Activated T-helper 1 cell treated with anti-CD3 and anti-CD28 coated beads, Interleukin-12 subunit alpha, Interleukin-12 subunit beta, Interleukin-2, Interleukin-4 antibody, amounts not matched to agents 30 ng/mL and 10 ng/mL and 1 ng/mL, durations not matched to agents 14 hours and 24 hours and 36 hours (primary cell): ENCODE measurements at regions of chr3 and their contacts with region 1.

Region 1: DNA sequence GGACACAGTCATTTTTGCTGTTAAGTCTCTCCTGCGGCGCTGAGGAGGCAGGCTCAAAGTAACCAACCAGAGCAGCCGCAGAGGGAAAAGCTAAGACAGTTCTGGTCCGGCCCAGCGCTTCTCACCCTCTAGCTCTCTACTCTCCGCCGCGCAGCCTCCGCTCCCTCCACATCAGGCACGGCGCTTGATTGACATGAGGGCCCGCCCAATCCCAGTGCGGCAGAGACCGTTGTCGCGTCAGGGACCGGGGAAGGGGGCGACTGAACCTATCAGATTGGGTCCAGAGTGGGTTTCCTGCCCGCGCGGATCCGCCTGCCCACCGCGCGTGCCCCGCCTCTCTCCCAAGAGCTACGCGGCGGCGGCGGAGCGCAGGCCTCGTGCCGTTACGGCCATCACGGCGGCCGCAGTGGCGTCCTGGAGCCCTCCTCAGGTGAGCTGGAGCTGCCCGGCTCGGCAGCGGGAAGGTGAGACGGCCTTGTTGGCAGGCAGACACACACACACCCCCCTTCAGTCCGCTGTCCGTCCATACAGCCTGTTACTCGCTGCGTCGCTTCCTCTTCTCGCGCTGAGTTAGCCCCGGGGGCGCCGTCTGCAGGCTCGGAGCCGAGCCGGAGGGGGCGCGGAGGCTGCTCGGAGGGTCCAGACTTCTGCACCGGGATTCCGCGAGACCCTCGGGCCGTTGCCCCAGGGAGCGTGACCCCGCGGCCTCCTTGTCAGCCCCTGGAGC is at the start of gene NCK1:
- DNase-seq: peak; percentile 98
- H3K4me3 Mint-ChIP-seq: peak within 1 kb of the TSS; percentile 97
- H3K27ac Mint-ChIP-seq: peak within 1 kb of the TSS; percentile 99
- H3K4me1 Mint-ChIP-seq: peaks cover 55% of the 10 kb centered on the region
- H3K27me3 Mint-ChIP-seq: no peaks in the 10 kb centered on the region
- total RNA-seq, gene NCK1: 33.2 and 33.4 TPM in 2 replicates

Region 2: GRCh38 chr3:136250226-136250902 is 611.7 kb before region 1 on chr3 and contains the start of gene PCCB:
- intact Hi-C with region 1: loop called (anchors 1 kb)
- DNase-seq: peak; percentile 88
- H3K4me3 Mint-ChIP-seq: peak within 1 kb of the TSS; percentile 89
- H3K27ac Mint-ChIP-seq: peak within 1 kb of the TSS; percentile 91
- H3K4me1 Mint-ChIP-seq: peaks cover 21% of the 10 kb centered on the region
- H3K27me3 Mint-ChIP-seq: no peaks in the 10 kb centered on the region
- total RNA-seq, gene PCCB: 41.4 and 41.7 TPM in 2 replicates

Region 3: GRCh38 chr3:136787349-136787748 is 74.7 kb before region 1 on chr3:
- intact Hi-C with region 1: loop called (anchors 1 kb)
- DNase-seq: peak; percentile 28
- H3K4me3 Mint-ChIP-seq: peak overlapping the region; percentile 48
- H3K27ac Mint-ChIP-seq: peak overlapping the region; percentile 71
- H3K4me1 Mint-ChIP-seq: peaks cover 16% of the 10 kb centered on the region
- H3K27me3 Mint-ChIP-seq: peaks cover 1% of the 10 kb centered on the region

Region 4: DNA sequence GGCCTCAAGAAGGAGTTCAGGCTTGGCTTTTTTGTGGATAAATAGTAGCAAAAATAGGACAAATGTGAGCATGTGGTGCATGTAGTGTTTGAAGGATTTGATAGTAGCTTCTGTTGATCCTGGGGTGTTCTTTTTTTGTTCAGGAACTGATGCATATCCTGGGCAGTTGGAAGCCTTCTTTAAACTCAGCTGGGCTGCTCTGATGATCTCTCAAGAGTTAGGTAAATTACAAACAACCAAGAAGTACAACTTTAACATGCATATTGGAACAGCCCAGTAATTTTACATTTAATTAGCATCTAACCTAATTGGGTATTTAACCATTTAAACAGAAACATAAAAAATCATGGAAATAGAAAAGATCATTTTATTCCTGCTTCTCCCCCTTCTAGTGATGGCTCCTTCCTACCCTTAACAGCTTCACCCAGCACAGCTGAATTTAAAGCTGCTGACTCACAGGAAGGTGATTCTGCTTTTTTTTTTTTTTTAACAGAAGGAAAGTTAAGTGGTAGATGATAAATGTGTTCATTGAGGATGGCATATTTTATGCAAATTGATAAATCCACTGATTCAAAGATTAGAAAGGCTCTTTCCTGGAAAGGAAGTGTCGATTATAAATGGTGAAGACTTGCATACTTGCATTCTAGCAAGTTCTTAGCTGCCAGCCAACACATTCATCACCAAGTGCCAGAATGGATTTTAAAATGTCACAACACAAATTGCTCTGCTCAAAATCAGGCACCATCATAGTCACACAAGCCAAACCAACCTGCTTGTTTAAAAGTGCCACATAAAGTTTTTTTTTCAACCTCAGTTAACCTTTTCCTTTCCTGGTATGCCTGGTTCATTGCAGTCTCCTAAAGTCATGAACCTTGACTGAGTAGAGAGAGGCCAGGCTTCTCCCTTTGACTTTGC is 23.2 kb before region 1 on chr3:
- intact Hi-C with region 1: loop called (anchors 2 kb)
- DNase-seq: no peak
- H3K4me3 Mint-ChIP-seq: no peak overlapping the region
- H3K27ac Mint-ChIP-seq: no peak overlapping the region
- H3K4me1 Mint-ChIP-seq: peaks cover 21% of the 10 kb centered on the region
- H3K27me3 Mint-ChIP-seq: no peaks in the 10 kb centered on the region

Region 5: GRCh38 chr3:136919799-136920580 is 57.9 kb after region 1 on chr3:
- intact Hi-C with region 1: loop called (anchors 1 kb)
- DNase-seq: peak; percentile 33
- H3K4me3 Mint-ChIP-seq: peak overlapping the region; percentile 35
- H3K27ac Mint-ChIP-seq: peak overlapping the region; percentile 72
- H3K4me1 Mint-ChIP-seq: peaks cover 78% of the 10 kb centered on the region
- H3K27me3 Mint-ChIP-seq: no peaks in the 10 kb centered on the region

Region 6: GRCh38 chr3:137013955-137014688 is 152.1 kb after region 1 on chr3:
- intact Hi-C with region 1: loop called (anchors 1 kb)
- DNase-seq: peak; percentile 72
- H3K4me3 Mint-ChIP-seq: peak overlapping the region; percentile 78
- H3K27ac Mint-ChIP-seq: no peak overlapping the region
- H3K4me1 Mint-ChIP-seq: peaks cover 10% of the 10 kb centered on the region
- H3K27me3 Mint-ChIP-seq: no peaks in the 10 kb centered on the region